Activated CD4-positive, alpha-beta memory T cell treated with anti-CD3 and anti-CD28 coated beads for 36 hours (primary cell): ENCODE measurements at regions of chr6 and their contacts with region 1.

Region 1: GRCh38 chr6:111050261-111051023 is 36.9 kb upstream of the SLC16A10 start:
- DNase-seq: no peak
- H3K4me3 Mint-ChIP-seq: no peak overlapping the region
- H3K27ac Mint-ChIP-seq: no peak overlapping the region
- H3K4me1 Mint-ChIP-seq: no peaks in the 10 kb centered on the region
- H3K27me3 Mint-ChIP-seq: no peaks in the 10 kb centered on the region

Region 2: DNA sequence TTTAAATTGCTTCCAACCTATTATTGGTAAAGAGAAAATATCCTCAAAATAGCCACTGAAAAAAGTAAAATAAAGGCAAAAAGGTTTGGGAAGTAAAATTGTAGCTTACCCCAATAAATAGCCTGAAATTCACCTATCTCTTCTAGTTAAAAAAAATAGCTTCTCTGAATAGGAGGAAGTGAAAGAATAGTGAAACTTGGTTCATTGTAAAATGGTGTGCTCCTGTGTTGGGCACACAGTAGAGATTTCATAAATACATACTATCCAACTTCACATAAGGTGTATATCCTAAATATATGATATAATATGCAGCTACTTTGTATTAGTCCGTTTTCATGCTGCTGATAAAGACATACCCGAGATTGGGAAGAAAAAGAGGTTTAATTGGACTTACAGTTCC is 280.5 kb before region 1 on chr6:
- CTCF ChIA-PET with region 1: no interaction called
- POLR2A ChIA-PET with region 1: no interaction called
- intact Hi-C with region 1: no loop called
- DNase-seq: no peak
- H3K4me3 Mint-ChIP-seq: no peak overlapping the region
- H3K27ac Mint-ChIP-seq: no peak overlapping the region
- H3K4me1 Mint-ChIP-seq: no peaks in the 10 kb centered on the region
- H3K27me3 Mint-ChIP-seq: no peaks in the 10 kb centered on the region

Region 3: GRCh38 chr6:111027219-111027618 is 23.2 kb before region 1 on chr6:
- CTCF ChIA-PET with region 1: no interaction called
- POLR2A ChIA-PET with region 1: no interaction called
- intact Hi-C with region 1: loop called (anchors 1 kb)
- DNase-seq: no peak
- H3K4me3 Mint-ChIP-seq: no peak overlapping the region
- H3K27ac Mint-ChIP-seq: no peak overlapping the region
- H3K4me1 Mint-ChIP-seq: peaks cover 4% of the 10 kb centered on the region
- H3K27me3 Mint-ChIP-seq: no peaks in the 10 kb centered on the region